ENCODE measurements at regions of chr2 and their contacts with region 1.

Region 1: GRCh38 chr2:241110607-241111439 is 8.7 kb upstream of the MTERF4 start:
- DNase-seq: no peak
- ATAC-seq: peak; percentile 27
- H3K4me3 Mint-ChIP-seq: peak overlapping the region; percentile 83
- H3K27ac Mint-ChIP-seq: peak overlapping the region; percentile 95
- H3K4me1 Mint-ChIP-seq: peaks cover 45% of the 10 kb centered on the region
- H3K27me3 Mint-ChIP-seq: no peaks in the 10 kb centered on the region

Region 2: GRCh38 chr2:241095594-241096286 is 15.1 kb before region 1 on chr2:
- POLR2A ChIA-PET with region 1: interaction called, 18 read pairs
- DNase-seq: no peak
- ATAC-seq: peak; percentile 77
- H3K4me3 Mint-ChIP-seq: peak overlapping the region; percentile 40
- H3K27ac Mint-ChIP-seq: peak overlapping the region; percentile 73
- H3K4me1 Mint-ChIP-seq: peaks cover 35% of the 10 kb centered on the region
- H3K27me3 Mint-ChIP-seq: no peaks in the 10 kb centered on the region

Region 3: GRCh38 chr2:241149925-241150659 is 39.3 kb after region 1 on chr2 and contains the start of gene PPP1R7:
- POLR2A ChIA-PET with region 1: interaction called, 29 read pairs
- DNase-seq: peak; percentile 90
- ATAC-seq: peak; percentile 82
- H3K4me3 Mint-ChIP-seq: peak within 1 kb of the TSS; percentile 94
- H3K27ac Mint-ChIP-seq: peak within 1 kb of the TSS; percentile 87
- H3K4me1 Mint-ChIP-seq: peaks cover 46% of the 10 kb centered on the region
- H3K27me3 Mint-ChIP-seq: no peaks in the 10 kb centered on the region
- total RNA-seq, gene PPP1R7: 78.8 to 84.6 TPM

Measured in activated naive CD8-positive, alpha-beta T cell treated with anti-CD3 and anti-CD28 coated beads, Interleukin-2, amount 10 ng/mL, durations not matched to agents 7 days and 5 days (primary cell).